CD8-positive, alpha-beta T cell (primary cell): ENCODE measurements at regions of chr2 and their contacts with region 1.

Region 1: DNA sequence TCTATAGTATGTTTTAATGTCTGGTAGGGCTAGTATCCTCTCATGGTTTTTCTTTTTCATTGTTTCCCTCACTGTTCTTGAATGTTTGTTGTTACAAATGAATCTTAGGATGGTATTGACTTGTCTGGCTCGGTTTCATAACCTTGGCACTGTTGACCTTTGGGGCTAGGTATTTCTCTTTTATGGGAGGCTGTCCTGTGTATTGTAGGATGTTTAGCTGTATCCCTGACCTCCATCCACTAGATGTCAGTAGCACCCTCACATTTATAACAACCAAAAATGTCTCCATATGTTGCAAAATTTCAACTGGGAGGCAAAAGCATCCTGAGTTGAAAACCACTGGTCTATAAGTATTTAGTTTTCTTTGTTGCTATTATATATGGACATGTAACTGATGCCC is 7.0 kb upstream of the AOX1 start:
- DNase-seq: peak in 2 of 9 experiments; percentile 30 to 45
- ATAC-seq: no peak
- H3K4me3 ChIP-seq: no peak overlapping the region
- H3K4me3 Mint-ChIP-seq: no peak overlapping the region
- H3K27ac ChIP-seq: no peak overlapping the region
- H3K27ac Mint-ChIP-seq: no peak overlapping the region
- H3K4me1 ChIP-seq: no peaks in the 10 kb centered on the region
- H3K4me1 Mint-ChIP-seq: no peaks in the 10 kb centered on the region
- H3K27me3 ChIP-seq: no peaks in the 10 kb centered on the region
- H3K27me3 Mint-ChIP-seq: peaks cover 5% of the 10 kb centered on the region
- CTCF ChIP-seq: peak; percentile 35

Region 2: GRCh38 chr2:200703127-200703925 is 124.5 kb after region 1 on chr2:
- CTCF ChIA-PET with region 1: no interaction called
- POLR2A ChIA-PET with region 1: no interaction called
- intact Hi-C with region 1: loop called (anchors 2 to 5 kb)
- DNase-seq: peak in 2 of 9 experiments; percentile 30 to 46
- ATAC-seq: peak; percentile 34
- H3K4me3 ChIP-seq: no peak overlapping the region
- H3K4me3 Mint-ChIP-seq: no peak overlapping the region
- H3K27ac ChIP-seq: no peak overlapping the region
- H3K27ac Mint-ChIP-seq: no peak overlapping the region
- H3K4me1 ChIP-seq: no peaks in the 10 kb centered on the region
- H3K4me1 Mint-ChIP-seq: peaks cover 7% of the 10 kb centered on the region
- H3K27me3 ChIP-seq: no peaks in the 10 kb centered on the region
- H3K27me3 Mint-ChIP-seq: peaks cover 5% of the 10 kb centered on the region
- CTCF ChIP-seq: peak; percentile 10

Region 3: DNA sequence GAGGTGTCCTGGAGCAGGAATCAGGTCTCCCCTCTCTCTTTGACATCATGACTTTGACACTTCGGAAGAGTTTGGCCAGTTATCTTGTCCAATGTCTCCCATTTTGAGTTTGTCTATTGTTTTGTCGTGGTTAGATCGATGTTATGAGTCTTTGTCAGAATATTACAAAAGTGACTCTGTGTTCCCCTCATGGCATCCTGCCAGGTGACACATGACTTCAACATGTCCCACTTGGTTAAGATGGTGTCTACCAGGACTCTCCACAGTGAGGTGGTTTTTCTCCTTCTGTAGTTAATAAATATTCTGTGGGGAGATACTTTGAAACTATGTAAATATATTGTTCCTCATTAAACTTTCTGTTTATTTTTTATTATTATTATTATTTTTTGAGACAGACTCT is 156.3 kb after region 1 on chr2:
- CTCF ChIA-PET with region 1: no interaction called
- POLR2A ChIA-PET with region 1: no interaction called
- intact Hi-C with region 1: loop called (anchors 1 to 10 kb)
- DNase-seq: peak in 1 of 9 experiments; percentile 15
- ATAC-seq: no peak
- H3K4me3 ChIP-seq: no peak overlapping the region
- H3K4me3 Mint-ChIP-seq: no peak overlapping the region
- H3K27ac ChIP-seq: no peak overlapping the region
- H3K27ac Mint-ChIP-seq: no peak overlapping the region
- H3K4me1 ChIP-seq: no peaks in the 10 kb centered on the region
- H3K4me1 Mint-ChIP-seq: no peaks in the 10 kb centered on the region
- H3K27me3 ChIP-seq: no peaks in the 10 kb centered on the region
- H3K27me3 Mint-ChIP-seq: peaks cover 5% of the 10 kb centered on the region
- CTCF ChIP-seq: no peak

Region 4: DNA sequence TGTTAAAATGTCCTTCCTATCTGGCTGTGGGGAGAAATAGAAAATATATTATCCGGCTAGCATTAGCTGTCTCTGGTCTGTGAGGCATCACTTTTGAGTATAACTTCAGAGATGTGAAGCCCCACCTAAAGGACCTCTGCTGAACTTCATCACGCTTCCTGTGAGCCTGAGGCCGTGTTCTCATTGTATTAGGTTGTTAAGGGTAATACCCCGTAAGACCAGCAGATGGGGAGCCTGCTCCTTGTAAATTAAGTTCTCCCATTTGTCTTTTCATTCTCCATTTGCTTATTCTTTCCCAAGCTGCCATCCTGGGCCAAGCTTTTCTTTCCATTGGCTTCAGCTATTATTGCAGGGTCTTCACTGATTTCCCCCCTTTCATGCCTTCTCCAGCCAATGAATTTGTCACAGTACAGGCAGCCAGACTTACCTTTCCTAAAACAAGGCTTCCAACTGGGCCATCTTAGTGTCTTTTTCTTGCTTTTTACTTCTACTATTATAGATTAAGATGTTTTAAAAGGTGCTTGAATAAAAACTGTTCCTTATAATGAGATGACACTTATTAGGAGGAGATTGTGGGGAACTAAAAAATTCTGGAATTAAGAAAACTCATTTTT is 322.8 kb after region 1 on chr2:
- CTCF ChIA-PET with region 1: no interaction called
- POLR2A ChIA-PET with region 1: no interaction called
- intact Hi-C with region 1: loop called in 1 of 2 experiments (anchors 10 kb)
- DNase-seq: peak; percentile 36 to 92 (median 73)
- ATAC-seq: peak; percentile 100
- H3K4me3 ChIP-seq: no peak overlapping the region
- H3K4me3 Mint-ChIP-seq: no peak overlapping the region
- H3K27ac ChIP-seq: peak overlapping the region in 1 of 2 experiments; percentile 4
- H3K27ac Mint-ChIP-seq: peak overlapping the region; percentile 45
- H3K4me1 ChIP-seq: peaks cover 4% of the 10 kb centered on the region
- H3K4me1 Mint-ChIP-seq: peaks cover 7% of the 10 kb centered on the region
- H3K27me3 ChIP-seq: no peaks in the 10 kb centered on the region
- H3K27me3 Mint-ChIP-seq: no peaks in the 10 kb centered on the region
- CTCF ChIP-seq: peak; percentile 84

Region 5: GRCh38 chr2:201176081-201176481 is 597.3 kb after region 1 on chr2:
- CTCF ChIA-PET with region 1: no interaction called
- POLR2A ChIA-PET with region 1: no interaction called
- intact Hi-C with region 1: loop called (anchors 2 to 5 kb)
- DNase-seq: no peak
- ATAC-seq: no peak
- H3K4me3 ChIP-seq: no peak overlapping the region
- H3K4me3 Mint-ChIP-seq: no peak overlapping the region
- H3K27ac ChIP-seq: no peak overlapping the region
- H3K27ac Mint-ChIP-seq: no peak overlapping the region
- H3K4me1 ChIP-seq: no peaks in the 10 kb centered on the region
- H3K4me1 Mint-ChIP-seq: peaks cover 12% of the 10 kb centered on the region
- H3K27me3 ChIP-seq: no peaks in the 10 kb centered on the region
- H3K27me3 Mint-ChIP-seq: no peaks in the 10 kb centered on the region
- CTCF ChIP-seq: no peak